ENCODE measurements at regions of chr22 and their contacts with region 1.

Region 1: DNA sequence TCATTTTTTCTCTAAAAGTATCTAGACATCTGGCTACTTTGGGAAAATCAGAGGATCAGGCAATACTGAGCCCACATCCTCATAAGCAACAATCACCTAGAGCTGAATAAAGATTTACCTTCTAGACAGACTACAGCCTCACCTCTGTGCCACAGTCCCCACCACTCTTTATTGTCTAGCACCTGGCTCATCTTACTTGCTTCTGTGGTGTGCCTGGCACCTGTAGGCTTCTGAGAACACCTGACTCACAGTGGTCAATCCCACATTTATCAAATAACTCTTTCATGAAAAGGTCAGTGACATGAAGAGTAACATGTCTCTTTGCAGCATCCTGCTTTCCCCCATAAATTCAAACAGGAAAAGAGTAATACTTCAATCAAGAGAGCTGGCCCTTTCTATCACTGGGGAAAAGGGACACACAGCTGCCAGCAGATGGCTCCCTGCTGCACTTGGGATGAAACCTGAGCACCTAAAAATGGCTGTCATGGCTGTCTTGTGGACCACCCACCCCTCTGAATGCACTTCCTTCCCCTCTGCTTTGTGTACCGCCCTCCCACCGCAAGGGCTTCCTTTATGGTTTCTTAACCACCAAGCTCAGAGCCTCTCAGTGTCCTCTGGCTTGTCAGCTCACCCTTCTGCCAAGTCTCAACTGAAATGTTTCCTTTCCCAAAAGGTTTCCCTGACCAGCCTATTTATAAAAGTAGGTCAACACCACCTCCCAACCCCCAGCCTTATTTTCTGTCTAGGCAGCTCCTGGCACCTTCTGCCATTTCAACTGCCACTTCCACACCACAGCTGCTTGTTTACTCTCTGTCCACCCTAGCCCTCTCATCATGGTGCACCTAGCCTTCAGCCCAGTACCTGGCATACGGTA is 9.3 kb downstream of the TFIP11 start:
- DNase-seq: peak in 1 of 2 experiments; percentile 56
- H3K4me3 ChIP-seq: no peak overlapping the region
- H3K27ac ChIP-seq: 0 out of 2 replicates have a peak overlapping the region, but pooled peaks have one; percentile 25
- H3K4me1 ChIP-seq: peaks cover 0 to 4% (median 2%) of the 10 kb centered on the region in 4 experiments; a peak in 3 of 7 replicates
- H3K27me3 ChIP-seq: no peaks in the 10 kb centered on the region
- CTCF ChIP-seq: peak; percentile 73 to 79 (median 73)
- EP300 ChIP-seq: no peak
- POLR2A ChIP-seq: no peak
- RAD21 ChIP-seq: peak; percentile 64 to 70

Region 2: GRCh38 chr22:26483439-26484359 is 19.2 kb before region 1 on chr22 and contains the starts of genes HPS4 and SRRD:
- CTCF ChIA-PET with region 1: interaction called, 24 read pairs
- POLR2A ChIA-PET with region 1: interaction called, 11 read pairs
- DNase-seq: peak; percentile 62 to 96
- H3K4me3 ChIP-seq: peak within 1 kb of the TSS; percentile 77 to 99 (median 90)
- H3K27ac ChIP-seq: peak within 1 kb of the TSS; percentile 76
- H3K4me1 ChIP-seq: peaks cover 0 to 14% (median 6%) of the 10 kb centered on the region in 4 experiments; a peak in 5 of 7 replicates
- H3K27me3 ChIP-seq: no peaks in the 10 kb centered on the region; a peak in 1 of 7 replicates
- CTCF ChIP-seq: no peak
- EP300 ChIP-seq: peak in 1 of 2 experiments; percentile 85; a peak in 2 of 3 replicates
- POLR2A ChIP-seq: peak; percentile 64 to 92
- RAD21 ChIP-seq: no peak
- total RNA-seq, gene HPS4: 32.9 and 35.2 TPM in 2 replicates
- total RNA-seq, gene SRRD: 25.3 and 26.3 TPM in 2 replicates

Region 3: GRCh38 chr22:26489447-26490031 is 13.4 kb before region 1 on chr22:
- CTCF ChIA-PET with region 1: interaction called, 24 read pairs
- POLR2A ChIA-PET with region 1: interaction called, 13 read pairs
- DNase-seq: no peak
- H3K4me3 ChIP-seq: no peak overlapping the region
- H3K27ac ChIP-seq: no peak overlapping the region
- H3K4me1 ChIP-seq: peaks cover 0 to 2% (median 0%) of the 10 kb centered on the region in 4 experiments; a peak in 1 of 7 replicates
- H3K27me3 ChIP-seq: no peaks in the 10 kb centered on the region; a peak in 1 of 7 replicates
- CTCF ChIP-seq: no peak
- EP300 ChIP-seq: no peak
- POLR2A ChIP-seq: no peak
- RAD21 ChIP-seq: no peak

Region 4: GRCh38 chr22:26672590-26673468 is 169.9 kb after region 1 on chr22:
- CTCF ChIA-PET with region 1: interaction called, 38 read pairs
- POLR2A ChIA-PET with region 1: interaction called, 5 read pairs
- DNase-seq: peak; percentile 80 to 94
- H3K4me3 ChIP-seq: peak overlapping the region; percentile 70 to 81 (median 71)
- H3K27ac ChIP-seq: peak overlapping the region; percentile 79
- H3K4me1 ChIP-seq: peaks cover 4 to 24% (median 18%) of the 10 kb centered on the region in 4 experiments
- H3K27me3 ChIP-seq: no peaks in the 10 kb centered on the region
- CTCF ChIP-seq: peak; percentile 51 to 76 (median 68)
- EP300 ChIP-seq: no peak
- POLR2A ChIP-seq: peak; percentile 75 to 85
- RAD21 ChIP-seq: peak in 1 of 2 experiments; percentile 31; a peak in 2 of 4 replicates

Measured in H1 (cell line).